IMR-90 (cell line): ENCODE measurements at regions of chr2 and their contacts with region 1.

Region 1: GRCh38 chr2:188629689-188630527 is 338.2 kb downstream of the GULP1 start:
- DNase-seq: peak; percentile 51
- ATAC-seq: peak; percentile 68
- H3K4me3 ChIP-seq: no peak overlapping the region
- H3K27ac ChIP-seq: peak overlapping the region; percentile 67; the same call in 1 of the 2 replicates
- H3K4me1 ChIP-seq: peaks cover 9% of the 10 kb centered on the region
- H3K27me3 ChIP-seq: no peaks in the 10 kb centered on the region
- CTCF ChIP-seq: no peak
- POLR2A ChIP-seq: no peak
- RAD21 ChIP-seq: no peak

Region 2: GRCh38 chr2:188551671-188552070 is 78.2 kb before region 1 on chr2:
- CTCF ChIA-PET with region 1: no interaction called
- POLR2A ChIA-PET with region 1: no interaction called
- dilution Hi-C with region 1: no loop called
- in situ Hi-C with region 1: no loop called
- intact Hi-C with region 1: loop called (anchors 5 kb)
- DNase-seq: no peak
- ATAC-seq: no peak
- H3K4me3 ChIP-seq: no peak overlapping the region
- H3K27ac ChIP-seq: no peak overlapping the region
- H3K4me1 ChIP-seq: no peaks in the 10 kb centered on the region
- H3K27me3 ChIP-seq: no peaks in the 10 kb centered on the region
- CTCF ChIP-seq: no peak
- POLR2A ChIP-seq: no peak
- RAD21 ChIP-seq: no peak